Heart left ventricle (tissue), 16 donors: ENCODE measurements at regions of chr12 and their contacts with region 1.

Region 1: DNA sequence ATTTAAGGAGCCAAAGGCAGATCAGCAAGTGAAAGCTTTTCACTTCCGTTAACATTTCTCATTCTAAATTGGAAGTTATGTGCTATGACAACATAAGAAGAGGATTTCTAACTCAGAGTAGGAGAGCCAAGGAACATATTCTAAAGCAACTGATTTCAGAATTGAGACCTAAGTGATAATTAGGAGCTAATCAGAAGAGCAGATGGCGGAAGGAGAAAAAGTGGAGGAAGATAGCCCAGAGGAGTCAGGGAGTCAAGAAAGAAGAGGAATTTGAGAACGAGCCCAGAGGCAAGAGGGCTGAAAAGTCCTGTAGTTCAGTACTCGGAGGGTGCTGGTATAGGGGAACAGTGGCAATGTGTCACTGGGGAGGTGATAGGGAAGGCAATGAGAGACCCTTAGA is 162.4 kb downstream of the CNTN1 start:
- DNase-seq: no peak
- ATAC-seq: no peak
- H3K4me3 ChIP-seq: no peak overlapping the region
- H3K27ac ChIP-seq: no peak overlapping the region
- H3K4me1 ChIP-seq: no peaks in the 10 kb centered on the region
- H3K27me3 ChIP-seq: no peaks in the 10 kb centered on the region
- CTCF ChIP-seq: no peak
- POLR2A ChIP-seq: no peak

Region 2: GRCh38 chr12:40622246-40622838 is 232.3 kb before region 1 on chr12:
- intact Hi-C with region 1: no loop called
- DNase-seq: peak in 1 of 5 donors; percentile 31
- ATAC-seq: no peak
- H3K4me3 ChIP-seq: no peak overlapping the region
- H3K27ac ChIP-seq: no peak overlapping the region
- H3K4me1 ChIP-seq: no peaks in the 10 kb centered on the region
- H3K27me3 ChIP-seq: no peaks in the 10 kb centered on the region
- CTCF ChIP-seq: peak; percentile 35 to 69 (median 56)
- POLR2A ChIP-seq: no peak

Region 3: DNA sequence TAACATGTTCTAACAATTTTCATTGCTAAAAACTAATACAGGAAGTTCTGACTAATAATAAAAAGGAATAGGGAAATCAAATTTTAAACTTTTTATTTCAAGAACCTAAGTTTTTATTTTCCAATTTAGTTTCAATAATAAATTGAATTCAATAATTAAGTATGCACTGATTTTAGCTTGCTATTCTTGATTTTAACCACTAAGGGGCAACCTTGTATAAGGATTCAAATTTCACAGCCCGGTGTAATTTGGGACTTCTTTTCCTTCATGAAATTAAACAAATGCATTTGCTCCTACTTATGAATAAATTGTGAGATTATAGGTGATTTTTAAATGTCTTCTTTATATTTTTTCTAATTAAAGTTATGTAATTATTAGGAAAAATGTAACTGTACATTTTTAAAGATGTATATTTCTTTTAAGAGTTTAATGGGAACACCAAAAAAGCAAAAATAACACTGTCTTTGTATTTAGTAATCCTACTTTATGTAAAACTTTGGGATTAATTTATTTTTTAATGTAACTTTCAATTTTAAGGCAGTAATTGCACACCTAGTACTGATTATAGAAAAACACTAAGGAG is 92.1 kb after region 1 on chr12:
- intact Hi-C with region 1: no loop called
- DNase-seq: no peak
- ATAC-seq: no peak
- H3K4me3 ChIP-seq: no peak overlapping the region
- H3K27ac ChIP-seq: no peak overlapping the region
- H3K4me1 ChIP-seq: no peaks in the 10 kb centered on the region
- H3K27me3 ChIP-seq: peaks cover 0 to 7% (median 0%) of the 10 kb centered on the region in 9 donors
- CTCF ChIP-seq: peak; percentile 42 to 76 (median 62)
- POLR2A ChIP-seq: no peak

Region 4: DNA sequence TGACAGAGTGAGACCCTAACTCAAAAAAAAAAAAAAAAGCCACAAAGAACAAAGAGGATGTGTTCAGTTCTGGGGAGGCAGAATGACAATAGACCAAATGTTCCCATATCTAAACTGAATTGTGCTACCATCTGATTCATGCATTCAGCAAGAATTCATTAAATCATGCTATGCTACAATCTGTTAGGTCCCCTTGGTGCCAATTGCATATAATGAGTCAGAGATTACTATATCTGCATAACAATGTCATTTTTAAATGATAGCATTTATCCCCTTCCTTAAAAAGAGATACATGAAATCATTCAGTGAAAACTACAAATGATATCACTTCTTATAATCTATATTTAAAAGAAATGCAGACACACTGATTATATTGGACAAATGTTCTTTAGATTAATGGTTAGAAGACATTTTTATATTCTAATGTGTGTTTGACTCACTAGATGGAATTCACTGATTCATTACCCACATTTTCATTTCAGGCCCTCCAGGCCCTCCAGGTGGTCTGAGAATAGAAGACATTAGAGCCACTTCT is 125.9 kb after region 1 on chr12:
- intact Hi-C with region 1: loop called in 1 of 10 experiments (anchors 5 kb)
- DNase-seq: no peak
- ATAC-seq: no peak
- H3K4me3 ChIP-seq: no peak overlapping the region
- H3K27ac ChIP-seq: no peak overlapping the region
- H3K4me1 ChIP-seq: no peaks in the 10 kb centered on the region
- H3K27me3 ChIP-seq: no peaks in the 10 kb centered on the region
- CTCF ChIP-seq: no peak
- POLR2A ChIP-seq: no peak

Region 5: GRCh38 chr12:41108032-41108431 is 253.4 kb after region 1 on chr12:
- intact Hi-C with region 1: no loop called
- DNase-seq: no peak
- ATAC-seq: no peak
- H3K4me3 ChIP-seq: no peak overlapping the region
- H3K27ac ChIP-seq: no peak overlapping the region
- H3K4me1 ChIP-seq: no peaks in the 10 kb centered on the region
- H3K27me3 ChIP-seq: no peaks in the 10 kb centered on the region
- CTCF ChIP-seq: no peak
- POLR2A ChIP-seq: no peak